Posterior cingulate gyrus (tissue), 11 donors: ENCODE measurements at regions of chr14 and their contacts with region 1.

Region 1: GRCh38 chr14:105045710-105046326 is 19.4 kb downstream of the GPR132 start:
- DNase-seq: peak; percentile 39 to 95 (median 75)

Region 2: GRCh38 chr14:104895786-104896661 is 149.8 kb before region 1 on chr14:
- intact Hi-C with region 1: loop called (anchors 10 kb)
- DNase-seq: peak in 4 of 10 donors; percentile 7 to 75 (median 38)

Region 3: GRCh38 chr14:104976198-104977007 is 69.4 kb before region 1 on chr14:
- intact Hi-C with region 1: loop called (anchors 1 kb)
- DNase-seq: peak; percentile 50 to 96 (median 76)

Region 4: GRCh38 chr14:105020815-105021655 is 24.8 kb before region 1 on chr14 and contains the start of gene CDCA4:
- intact Hi-C with region 1: loop called (anchors 2 kb)
- DNase-seq: peak; percentile 93 to 100 (median 98)

Region 5: DNA sequence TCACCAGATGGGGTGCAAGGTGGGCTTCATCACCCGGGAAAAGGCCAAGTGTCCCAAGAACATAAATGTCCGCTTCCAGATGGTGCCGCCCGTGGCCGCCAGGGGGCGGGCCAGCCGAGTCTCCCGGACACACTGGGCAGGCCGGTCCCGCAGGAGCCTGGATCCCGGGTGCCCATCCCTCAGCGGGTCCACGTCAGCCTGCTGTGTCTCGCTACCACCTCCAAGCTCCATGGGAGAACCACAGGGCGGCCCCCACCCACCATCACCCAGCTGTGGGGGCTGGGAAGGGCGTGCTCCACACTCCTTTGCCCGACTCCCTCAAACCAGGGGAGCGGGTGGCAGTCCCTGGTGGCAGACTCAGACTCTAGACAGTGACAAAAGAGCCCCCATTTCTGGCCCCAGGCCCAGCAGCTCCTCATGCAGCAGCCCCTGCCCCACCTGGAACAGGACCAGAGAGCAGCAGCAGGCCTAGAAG is 157.3 kb after region 1 on chr14:
- intact Hi-C with region 1: no loop called
- DNase-seq: peak; percentile 61 to 97 (median 82)